ENCODE measurements at regions of chr5 and their contacts with region 1.

Region 1: GRCh38 chr5:42994246-42995151 is 45.6 kb downstream of the ANXA2R start:
- DNase-seq: peak; percentile 92
- ATAC-seq: peak; percentile 92
- H3K4me3 ChIP-seq: peak overlapping the region; percentile 1 to 56
- H3K27ac ChIP-seq: peak overlapping the region in 1 of 2 donors; percentile 61
- H3K4me1 ChIP-seq: peaks cover 0 to 3% of the 10 kb centered on the region in 2 donors
- H3K27me3 ChIP-seq: no peaks in the 10 kb centered on the region

Region 2: DNA sequence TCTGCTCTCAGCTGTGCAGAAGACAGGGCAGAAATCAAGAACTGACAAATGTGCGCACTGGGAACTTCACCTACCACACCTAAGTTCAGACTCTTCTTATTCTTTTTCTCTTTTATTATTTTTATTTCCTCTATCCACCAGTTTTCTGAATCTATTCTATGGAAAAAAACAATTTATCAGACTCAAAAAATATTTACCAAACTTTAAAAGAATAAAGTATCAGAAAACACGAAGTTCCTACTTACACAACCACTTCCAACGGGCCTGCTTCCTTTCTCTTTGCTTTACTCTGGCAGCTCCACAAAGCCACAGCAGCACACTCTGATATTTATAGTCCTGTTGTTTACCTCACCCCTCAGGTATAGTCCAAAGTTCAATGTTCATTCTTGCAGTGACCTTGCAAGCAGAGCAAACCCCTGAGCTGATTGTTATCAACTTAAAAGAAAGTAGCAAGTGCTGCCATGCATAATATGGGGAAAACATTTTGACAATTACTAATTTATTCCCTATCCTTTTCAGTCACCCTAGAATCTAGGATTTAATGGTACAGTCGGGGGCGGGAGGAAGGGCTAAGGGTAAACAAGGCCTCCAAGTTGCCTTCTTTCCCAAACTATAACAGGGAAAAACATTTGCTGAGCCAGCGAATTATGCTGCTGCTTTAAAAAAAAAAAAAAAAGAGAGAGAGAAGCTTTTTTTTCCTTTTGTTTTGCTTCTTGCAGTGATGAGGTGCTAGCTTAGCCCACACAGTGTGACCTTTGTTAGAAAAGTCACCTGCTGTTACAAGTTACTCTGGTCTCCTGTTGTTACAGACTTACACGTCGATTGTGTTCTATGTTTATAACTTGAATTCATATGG is 182.7 kb before region 1 on chr5 and contains the start of gene SELENOP:
- intact Hi-C with region 1: no loop called
- DNase-seq: peak in 1 of 2 donors; percentile 61
- ATAC-seq: peak; percentile 92
- H3K4me3 ChIP-seq: peak within 1 kb of the TSS; percentile 34
- H3K27ac ChIP-seq: no peak within 1 kb of the TSS
- H3K4me1 ChIP-seq: no peaks in the 10 kb centered on the region
- H3K27me3 ChIP-seq: no peaks in the 10 kb centered on the region
- total RNA-seq, gene SELENOP: 219 to 580 TPM

Region 3: GRCh38 chr5:42950440-42951292 is 43.8 kb before region 1 on chr5:
- intact Hi-C with region 1: loop called (anchors 1 to 2 kb)
- DNase-seq: peak; percentile 88
- ATAC-seq: peak; percentile 86
- H3K4me3 ChIP-seq: peak overlapping the region; percentile 11 to 58
- H3K27ac ChIP-seq: peak overlapping the region in 1 of 2 donors; percentile 78
- H3K4me1 ChIP-seq: no peaks in the 10 kb centered on the region
- H3K27me3 ChIP-seq: no peaks in the 10 kb centered on the region

Region 4: DNA sequence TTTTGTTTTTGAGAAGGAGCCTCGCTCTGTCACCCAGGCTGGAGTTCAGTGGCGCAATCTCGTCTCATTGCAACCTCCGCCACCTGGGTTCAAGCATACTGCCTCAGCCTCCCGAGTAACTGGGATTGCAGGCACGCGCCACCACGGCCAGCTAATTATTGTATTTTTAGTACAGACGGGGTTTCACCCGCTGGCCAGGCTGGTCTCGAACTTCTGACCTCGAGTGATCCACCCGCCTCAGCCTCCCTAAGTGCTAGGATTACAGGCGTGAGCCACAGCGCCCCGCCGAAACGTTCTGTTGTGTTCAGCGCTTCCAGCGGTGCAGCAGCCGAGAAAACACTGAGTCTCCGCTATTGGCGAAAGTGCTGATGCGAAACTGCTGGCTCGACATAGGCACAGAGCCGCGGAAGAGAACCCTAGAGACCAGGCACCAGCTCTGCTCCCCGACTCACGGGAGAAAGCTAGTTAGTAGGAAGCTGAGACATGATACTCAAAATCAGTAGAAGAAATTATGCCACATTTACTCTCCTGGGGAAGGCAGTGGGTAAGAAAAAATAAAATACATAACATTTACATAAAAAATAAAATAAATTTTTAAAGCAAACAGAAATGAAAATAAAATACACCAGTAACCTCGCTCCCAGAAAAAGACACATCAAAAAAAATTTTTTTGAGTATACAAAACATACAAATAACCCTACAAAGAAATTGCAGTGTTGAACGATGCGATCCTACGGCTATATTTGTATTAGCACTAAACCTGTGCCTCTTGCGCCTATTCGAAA is 14.1 kb after region 1 on chr5:
- intact Hi-C with region 1: loop called in 1 of 2 experiments (anchors 2 kb)
- DNase-seq: peak; percentile 92
- ATAC-seq: peak; percentile 93
- H3K4me3 ChIP-seq: peak overlapping the region; percentile 32 to 61
- H3K27ac ChIP-seq: peak overlapping the region in 1 of 2 donors; percentile 25
- H3K4me1 ChIP-seq: no peaks in the 10 kb centered on the region
- H3K27me3 ChIP-seq: no peaks in the 10 kb centered on the region

Region 5: DNA sequence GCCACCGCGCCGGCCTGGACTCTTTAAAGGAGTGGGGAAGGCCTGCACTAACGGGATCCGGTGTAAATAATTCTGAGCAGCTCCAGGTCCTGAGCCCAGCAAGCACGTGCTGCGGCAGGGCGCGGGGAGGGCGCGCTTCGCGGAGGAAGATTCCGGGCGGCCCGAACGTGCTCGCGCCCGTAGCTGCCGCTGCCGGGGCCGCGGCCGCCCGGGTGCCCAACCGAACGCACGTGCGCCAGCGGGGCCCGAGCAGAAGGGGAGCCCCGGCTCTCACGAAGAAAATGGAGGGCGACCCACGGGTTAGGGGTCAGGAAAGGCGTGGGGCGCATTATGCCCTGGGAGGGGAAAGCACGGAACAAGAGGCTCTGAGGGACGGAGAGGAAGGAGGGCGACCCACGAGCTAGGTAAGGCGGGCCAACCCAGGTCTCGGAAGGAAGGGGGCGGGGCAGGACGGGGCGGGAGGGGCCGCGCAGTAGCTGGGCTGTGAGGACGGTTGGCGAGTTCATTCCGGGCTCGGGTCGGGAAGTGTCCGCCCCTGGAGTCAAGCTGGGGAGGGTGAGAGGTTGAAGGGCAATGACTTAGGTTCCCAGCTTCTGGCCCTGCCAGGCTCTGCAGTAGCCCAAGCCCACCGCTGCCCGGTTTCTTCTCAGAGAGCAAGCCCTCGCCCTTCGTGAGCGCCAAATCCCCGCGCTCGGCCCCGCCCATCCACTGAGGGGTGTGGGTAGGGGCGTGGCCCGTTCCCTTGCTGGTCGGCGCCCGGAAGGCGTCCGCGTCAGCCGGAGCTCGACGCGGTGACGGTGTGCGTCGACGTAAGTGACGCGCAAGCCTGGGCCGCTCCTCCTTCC is 126.4 kb after region 1 on chr5 and contains the start of gene ZNF131:
- intact Hi-C with region 1: loop called in 1 of 2 experiments (anchors 5 kb)
- DNase-seq: peak; percentile 97 to 99
- ATAC-seq: peak; percentile 100
- H3K4me3 ChIP-seq: peak within 1 kb of the TSS; percentile 82 to 83
- H3K27ac ChIP-seq: peak within 1 kb of the TSS; percentile 83 to 92
- H3K4me1 ChIP-seq: no peaks in the 10 kb centered on the region
- H3K27me3 ChIP-seq: no peaks in the 10 kb centered on the region
- total RNA-seq, gene ZNF131: 36.6 to 45.0 TPM